GM12878 (cell line): ENCODE measurements at regions of chr15 and their contacts with region 1.

Region 1: GRCh38 chr15:90201130-90201949 is at the start of gene SEMA4B:
- DNase-seq: no peak
- ATAC-seq: peak; percentile 94
- H3K4me3 ChIP-seq: peak within 1 kb of the TSS; percentile 95
- H3K27ac ChIP-seq: peak within 1 kb of the TSS; percentile 37; the same call in 1 of the 2 replicates
- H3K4me1 ChIP-seq: peaks cover 14% of the 10 kb centered on the region
- H3K27me3 ChIP-seq: no peaks in the 10 kb centered on the region
- CTCF ChIP-seq: no peak
- EP300 ChIP-seq: no peak
- POLR2A ChIP-seq: peak; percentile 80
- RAD21 ChIP-seq: no peak
- polyA plus RNA-seq, gene SEMA4B: 0.87 to 1.4 TPM

Region 2: GRCh38 chr15:90184786-90185569 is 16.4 kb before region 1 on chr15:
- CTCF ChIA-PET with region 1: interaction called, 22 read pairs
- POLR2A ChIA-PET with region 1: interaction called, 101 read pairs
- RAD21 ChIA-PET with region 1: interaction called, 5 read pairs
- SMC1A ChIA-PET with region 1: interaction called, 45 read pairs
- in situ Hi-C with region 1: no loop called
- intact Hi-C with region 1: no loop called
- DNase-seq: no peak
- ATAC-seq: peak; percentile 92
- H3K4me3 ChIP-seq: peak overlapping the region; percentile 80
- H3K27ac ChIP-seq: peak overlapping the region; percentile 86
- H3K4me1 ChIP-seq: peaks cover 16% of the 10 kb centered on the region
- H3K27me3 ChIP-seq: no peaks in the 10 kb centered on the region
- CTCF ChIP-seq: no peak
- EP300 ChIP-seq: no peak
- POLR2A ChIP-seq: peak; percentile 66
- RAD21 ChIP-seq: no peak

Region 3: GRCh38 chr15:90214553-90215196 is 13.3 kb after region 1 on chr15:
- CTCF ChIA-PET with region 1: interaction called, 11 read pairs
- POLR2A ChIA-PET with region 1: interaction called, 13 read pairs
- RAD21 ChIA-PET with region 1: interaction called, 5 read pairs
- SMC1A ChIA-PET with region 1: interaction called, 20 read pairs
- in situ Hi-C with region 1: no loop called
- intact Hi-C with region 1: no loop called
- DNase-seq: no peak
- ATAC-seq: no peak
- H3K4me3 ChIP-seq: no peak overlapping the region
- H3K27ac ChIP-seq: no peak overlapping the region
- H3K4me1 ChIP-seq: peaks cover 23% of the 10 kb centered on the region
- H3K27me3 ChIP-seq: no peaks in the 10 kb centered on the region
- CTCF ChIP-seq: no peak
- EP300 ChIP-seq: no peak
- POLR2A ChIP-seq: no peak
- RAD21 ChIP-seq: no peak